ENCODE measurements at regions of chr20 and their contacts with region 1.

Region 1: DNA sequence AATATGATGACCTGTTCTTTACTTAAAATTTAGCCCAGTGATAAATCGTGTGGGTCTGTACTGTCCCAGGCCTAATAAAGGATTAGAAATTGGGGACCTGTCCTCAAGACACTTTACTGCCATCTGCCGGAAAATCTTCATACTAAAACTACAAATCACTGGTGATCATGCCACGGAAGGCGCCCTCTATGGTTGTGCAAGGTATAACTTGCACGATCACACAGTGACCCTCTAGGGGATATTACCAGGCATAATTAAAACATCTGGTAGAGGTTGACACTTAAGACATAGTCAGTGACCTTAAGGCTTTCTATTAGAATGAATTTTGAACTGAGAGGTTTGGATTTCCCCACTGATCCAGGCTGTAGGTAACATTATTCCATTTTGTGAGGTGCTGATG is 172.6 kb downstream of the BMP2 start:
- DNase-seq: no peak
- ATAC-seq: no peak
- H3K4me3 ChIP-seq: no peak overlapping the region
- H3K4me1 ChIP-seq: no peaks in the 10 kb centered on the region
- CTCF ChIP-seq: no peak

Region 2: DNA sequence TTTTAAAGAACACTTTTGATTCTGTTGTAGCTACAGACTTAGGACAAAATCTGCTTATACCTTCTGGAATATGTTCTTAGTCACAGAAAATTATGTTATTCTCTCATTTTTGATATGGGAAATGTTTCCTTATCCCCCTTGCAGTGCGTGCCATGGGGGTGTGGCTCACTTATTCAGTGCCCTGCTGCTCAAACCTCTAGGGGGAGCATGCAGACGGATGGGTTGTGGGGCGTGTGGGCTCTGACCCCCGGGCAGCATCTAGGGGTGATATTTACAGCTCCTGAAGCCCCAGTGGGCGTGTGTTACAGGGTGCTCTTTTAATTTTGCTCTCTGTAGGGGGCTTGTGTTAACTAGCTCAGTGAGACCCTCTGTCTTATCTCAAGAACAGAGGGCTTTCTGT is 756.0 kb before region 1 on chr20:
- intact Hi-C with region 1: loop called in 1 of 2 experiments (anchors 10 kb)
- DNase-seq: no peak
- ATAC-seq: no peak
- H3K4me3 ChIP-seq: no peak overlapping the region
- H3K4me1 ChIP-seq: no peaks in the 10 kb centered on the region
- CTCF ChIP-seq: no peak

Measured in mucosa of descending colon (tissue), 3 donors.